A673 (cell line): ENCODE measurements at regions of chr6 and their contacts with region 1.

Region 1: GRCh38 chr6:150800674-150801314 is 64.7 kb upstream of the MTHFD1L start:
- DNase-seq: no peak
- H3K4me3 ChIP-seq: no peak overlapping the region
- H3K27ac ChIP-seq: peak overlapping the region; percentile 62
- H3K4me1 ChIP-seq: peaks cover 24% of the 10 kb centered on the region
- H3K27me3 ChIP-seq: no peaks in the 10 kb centered on the region
- CTCF ChIP-seq: no peak

Region 2: DNA sequence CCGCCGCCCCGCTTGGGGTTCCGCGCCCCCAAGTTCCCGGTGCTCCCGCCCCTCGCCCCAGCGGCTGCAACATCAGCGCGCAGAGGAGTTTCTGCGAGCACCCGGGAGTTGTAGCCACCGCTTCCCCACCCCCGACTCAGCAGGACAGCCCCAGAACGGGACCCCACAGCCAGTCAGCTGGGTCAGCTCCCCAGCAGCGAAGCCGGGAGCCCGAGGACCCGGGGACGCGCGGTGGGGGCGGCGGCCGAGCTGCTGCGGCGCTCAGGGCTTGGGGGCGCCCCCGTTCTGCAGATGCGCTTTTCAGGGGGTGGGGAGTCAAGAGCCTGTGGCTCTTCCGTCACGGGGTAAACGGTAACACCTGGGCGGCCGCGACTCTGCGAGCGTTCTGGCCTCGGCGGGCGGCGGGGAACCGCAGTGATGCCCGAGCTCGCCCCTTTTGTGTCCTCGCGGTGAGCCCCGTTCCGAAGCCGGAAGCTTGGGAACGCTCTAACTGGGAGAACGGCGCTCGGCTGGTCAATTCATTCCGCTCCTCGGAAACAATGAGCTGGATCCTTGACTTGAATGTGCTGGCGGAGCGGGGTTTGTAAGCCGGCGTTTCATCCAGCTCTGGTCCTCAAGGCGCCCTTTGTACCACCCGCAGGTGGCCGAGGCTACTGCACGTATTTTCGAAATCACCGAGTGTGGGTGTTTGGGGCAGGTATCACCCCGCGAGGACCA is 200.3 kb before region 1 on chr6:
- CTCF ChIA-PET with region 1: no interaction called
- POLR2A ChIA-PET with region 1: no interaction called
- intact Hi-C with region 1: loop called (anchors 10 kb)
- DNase-seq: peak; percentile 80
- H3K4me3 ChIP-seq: peak overlapping the region; percentile 63
- H3K27ac ChIP-seq: no peak overlapping the region
- H3K4me1 ChIP-seq: no peaks in the 10 kb centered on the region
- H3K27me3 ChIP-seq: peaks cover 11% of the 10 kb centered on the region
- CTCF ChIP-seq: peak; percentile 53